ENCODE measurements at regions of chr15 and their contacts with region 1.

Region 1: DNA sequence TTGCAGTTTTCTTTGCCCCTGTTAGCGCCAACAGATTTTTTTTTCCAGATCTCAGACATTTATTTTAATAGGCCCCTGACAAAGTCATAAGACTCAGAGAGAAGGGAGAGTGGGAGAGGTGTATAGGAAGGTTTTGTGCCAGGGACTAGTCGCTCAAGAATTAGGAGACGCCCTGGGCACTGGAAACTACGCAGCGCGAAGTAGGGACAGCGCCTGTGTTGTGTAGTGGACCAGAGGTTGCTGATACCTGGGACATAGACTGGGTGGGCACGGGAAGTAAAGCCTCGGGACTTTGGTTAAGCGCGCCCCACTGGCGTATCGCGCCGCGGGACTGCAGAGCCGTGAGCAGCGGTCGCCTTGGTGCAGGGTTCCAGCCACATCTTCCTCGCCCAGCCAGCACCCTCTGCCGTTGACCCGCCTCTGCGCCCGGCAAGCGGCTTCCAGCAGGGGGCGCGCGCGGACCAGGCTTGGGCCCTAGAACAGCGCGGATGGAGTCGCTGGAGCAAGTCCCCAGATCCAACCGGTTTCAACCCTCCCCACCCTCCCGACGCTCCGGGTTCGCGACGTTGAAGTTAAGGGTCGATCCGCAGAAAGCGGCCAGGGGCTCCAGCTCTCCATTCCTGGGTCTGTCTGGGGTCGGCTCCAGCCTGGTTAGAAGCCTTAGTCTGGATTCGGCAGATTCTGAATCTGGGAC is 3.0 kb upstream of the ISLR2 start:
- H3K4me3 ChIP-seq: peak overlapping the region; percentile 25
- H3K27ac ChIP-seq: peak overlapping the region; percentile 1; the same call in 1 of the 2 replicates
- H3K4me1 ChIP-seq: peaks cover 14% of the 10 kb centered on the region
- CTCF ChIP-seq: peak; percentile 100

Region 2: GRCh38 chr15:73767821-73768501 is 359.4 kb before region 1 on chr15:
- CTCF ChIA-PET with region 1: no interaction called
- POLR2A ChIA-PET with region 1: no interaction called
- H3K4me3 ChIP-seq: no peak overlapping the region
- H3K27ac ChIP-seq: no peak overlapping the region
- H3K4me1 ChIP-seq: no peaks in the 10 kb centered on the region
- CTCF ChIP-seq: no peak

Region 3: GRCh38 chr15:74144153-74144775 is 16.9 kb after region 1 on chr15:
- CTCF ChIA-PET with region 1: interaction called, 8 read pairs
- POLR2A ChIA-PET with region 1: interaction called, 10 read pairs
- H3K4me3 ChIP-seq: no peak overlapping the region
- H3K27ac ChIP-seq: no peak overlapping the region
- H3K4me1 ChIP-seq: no peaks in the 10 kb centered on the region
- CTCF ChIP-seq: no peak

Region 4: GRCh38 chr15:74170486-74171226 is 43.2 kb after region 1 on chr15:
- CTCF ChIA-PET with region 1: interaction called, 3 read pairs
- POLR2A ChIA-PET with region 1: interaction called, 13 read pairs
- H3K4me3 ChIP-seq: no peak overlapping the region
- H3K27ac ChIP-seq: no peak overlapping the region
- H3K4me1 ChIP-seq: peaks cover 8% of the 10 kb centered on the region
- CTCF ChIP-seq: no peak

Region 5: GRCh38 chr15:74196179-74196590 is 68.8 kb after region 1 on chr15:
- CTCF ChIA-PET with region 1: interaction called, 15 read pairs
- POLR2A ChIA-PET with region 1: interaction called, 3 read pairs
- H3K4me3 ChIP-seq: no peak overlapping the region
- H3K27ac ChIP-seq: peak overlapping the region; percentile 61; the same call in 1 of the 2 replicates
- H3K4me1 ChIP-seq: peaks cover 31% of the 10 kb centered on the region
- CTCF ChIP-seq: no peak

Region 6: DNA sequence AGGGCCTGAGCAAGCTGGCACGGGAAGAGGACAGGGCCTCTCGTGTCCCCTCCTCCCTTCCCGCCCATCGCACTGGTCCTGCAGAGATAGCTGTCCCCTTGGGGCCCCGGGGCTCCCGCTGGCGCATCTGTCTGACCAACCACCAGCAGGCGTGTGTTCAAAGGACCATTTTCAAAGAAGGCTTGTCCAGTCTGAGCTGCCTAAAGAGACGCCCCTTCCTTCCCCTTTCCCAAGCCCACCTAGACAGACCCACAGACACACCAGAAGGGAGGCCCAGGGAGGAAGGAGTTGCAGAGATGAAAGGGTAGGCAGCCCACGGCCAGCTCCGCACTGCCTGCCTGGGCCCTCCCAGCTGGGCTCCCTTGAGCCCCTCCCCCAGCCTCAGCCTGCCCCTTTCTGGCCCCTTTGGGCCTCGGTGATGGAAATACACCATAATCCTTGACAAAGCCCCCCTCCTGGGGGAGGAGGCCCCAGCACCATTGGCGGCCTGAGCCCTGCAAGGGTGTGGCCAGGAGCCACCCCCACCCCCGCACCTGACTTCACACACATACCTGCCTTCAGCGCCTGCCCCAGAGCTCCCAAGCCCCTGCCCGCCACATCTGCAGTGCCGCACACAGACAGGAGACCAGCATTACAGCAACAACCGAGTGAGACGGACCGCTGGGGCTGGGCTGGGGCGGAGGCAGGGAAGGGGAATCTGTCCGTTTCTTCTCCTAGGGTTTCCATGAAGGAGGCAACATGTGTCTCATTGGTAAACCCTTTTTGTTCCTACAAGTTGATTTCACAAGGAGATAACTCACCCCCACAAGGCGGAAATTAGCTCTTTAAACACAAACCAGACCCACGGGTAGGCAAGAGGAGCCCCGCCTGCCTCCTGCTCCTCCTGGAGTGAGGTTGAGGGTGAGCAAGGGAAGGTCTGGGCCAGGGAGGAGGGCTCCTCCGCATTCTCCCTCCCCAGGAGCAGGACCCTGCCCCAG is 75.3 kb after region 1 on chr15 and contains the start of gene STRA6:
- CTCF ChIA-PET with region 1: interaction called, 10 read pairs
- POLR2A ChIA-PET with region 1: interaction called, 6 read pairs
- H3K4me3 ChIP-seq: no peak within 1 kb of the TSS
- H3K27ac ChIP-seq: peak within 1 kb of the TSS; percentile 78
- H3K4me1 ChIP-seq: peaks cover 42% of the 10 kb centered on the region
- CTCF ChIP-seq: no peak

Region 7: GRCh38 chr15:74302821-74303359 is 175.5 kb after region 1 on chr15:
- CTCF ChIA-PET with region 1: interaction called, 100 read pairs
- POLR2A ChIA-PET with region 1: interaction called, 3 read pairs
- H3K4me3 ChIP-seq: no peak overlapping the region
- H3K27ac ChIP-seq: no peak overlapping the region
- H3K4me1 ChIP-seq: no peaks in the 10 kb centered on the region; the same call in 1 of the 2 replicates
- CTCF ChIP-seq: peak; percentile 87

Region 8: DNA sequence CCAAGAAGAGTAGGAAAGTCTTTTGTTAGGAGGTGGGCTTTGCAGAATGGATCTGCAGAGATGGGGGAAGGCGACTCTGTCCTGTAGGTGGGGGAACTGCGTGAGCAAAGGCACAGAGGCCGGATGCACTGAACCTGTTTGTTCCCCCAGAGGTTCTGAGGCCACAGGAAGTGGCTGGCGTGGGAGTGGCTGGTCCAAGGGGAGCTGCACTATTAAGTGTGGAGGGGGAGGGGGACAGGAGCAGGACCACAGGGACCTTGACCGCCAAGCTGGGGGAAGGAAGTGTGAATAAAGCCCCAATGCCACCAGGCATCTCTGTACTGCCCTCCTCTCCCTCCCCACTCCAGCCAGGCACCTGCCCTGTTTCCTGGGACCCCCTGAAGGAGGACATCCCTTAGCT is 188.2 kb after region 1 on chr15:
- CTCF ChIA-PET with region 1: interaction called, 100 read pairs
- POLR2A ChIA-PET with region 1: interaction called, 4 read pairs
- H3K4me3 ChIP-seq: no peak overlapping the region
- H3K27ac ChIP-seq: peak overlapping the region; percentile 12; the same call in 1 of the 2 replicates
- H3K4me1 ChIP-seq: peaks cover 30% of the 10 kb centered on the region
- CTCF ChIP-seq: no peak